Left ventricle myocardium superior (tissue), 1 donor: ENCODE measurements at regions of chr11 and their contacts with region 1.

Region 1: DNA sequence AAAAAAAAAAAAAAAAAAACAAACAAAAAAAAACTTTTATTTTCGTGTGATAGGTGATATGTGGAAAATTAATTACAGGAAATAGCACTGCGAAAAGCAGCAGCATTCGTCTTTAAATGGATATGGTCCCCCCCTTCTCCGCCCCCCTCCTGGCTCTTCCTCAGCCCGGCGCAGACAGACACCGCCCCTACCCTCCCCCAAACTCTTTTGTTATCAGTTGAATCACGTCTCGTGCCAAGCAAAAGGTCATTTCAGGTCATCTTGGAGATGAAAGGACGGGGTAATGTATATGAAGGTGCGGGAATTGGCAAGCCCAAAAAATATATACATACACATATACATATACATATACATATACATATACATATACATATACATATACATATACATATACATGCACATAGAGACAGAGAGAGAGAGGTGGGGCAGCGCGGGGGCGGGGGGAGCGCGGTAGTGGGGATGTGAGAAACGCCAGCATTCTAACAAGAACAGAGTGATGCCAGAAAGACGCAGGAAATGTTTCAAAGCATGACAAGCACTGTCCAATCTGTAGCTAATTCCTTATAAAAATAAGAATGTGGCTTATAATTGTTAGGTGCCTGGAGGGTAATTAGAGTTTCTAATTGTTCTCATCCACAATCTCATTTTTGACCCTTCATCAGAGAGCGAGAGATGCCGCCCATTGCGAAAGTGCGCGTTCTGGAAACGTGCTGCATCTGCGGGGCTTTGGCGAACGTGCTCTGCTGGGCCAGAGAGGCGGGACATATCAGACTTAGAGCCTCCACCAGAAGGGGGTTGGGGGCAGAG is 214.5 kb upstream of the UBASH3B start:
- DNase-seq: peak; percentile 63
- ATAC-seq: peak; percentile 76

Region 2: GRCh38 chr11:122367809-122368231 is 73.2 kb before region 1 on chr11:
- intact Hi-C with region 1: loop called (anchors 2 kb)
- DNase-seq: no peak
- ATAC-seq: peak; percentile 87